AG04449 (cell line): ENCODE measurements at regions of chr5 and their contacts with region 1.

Region 1: DNA sequence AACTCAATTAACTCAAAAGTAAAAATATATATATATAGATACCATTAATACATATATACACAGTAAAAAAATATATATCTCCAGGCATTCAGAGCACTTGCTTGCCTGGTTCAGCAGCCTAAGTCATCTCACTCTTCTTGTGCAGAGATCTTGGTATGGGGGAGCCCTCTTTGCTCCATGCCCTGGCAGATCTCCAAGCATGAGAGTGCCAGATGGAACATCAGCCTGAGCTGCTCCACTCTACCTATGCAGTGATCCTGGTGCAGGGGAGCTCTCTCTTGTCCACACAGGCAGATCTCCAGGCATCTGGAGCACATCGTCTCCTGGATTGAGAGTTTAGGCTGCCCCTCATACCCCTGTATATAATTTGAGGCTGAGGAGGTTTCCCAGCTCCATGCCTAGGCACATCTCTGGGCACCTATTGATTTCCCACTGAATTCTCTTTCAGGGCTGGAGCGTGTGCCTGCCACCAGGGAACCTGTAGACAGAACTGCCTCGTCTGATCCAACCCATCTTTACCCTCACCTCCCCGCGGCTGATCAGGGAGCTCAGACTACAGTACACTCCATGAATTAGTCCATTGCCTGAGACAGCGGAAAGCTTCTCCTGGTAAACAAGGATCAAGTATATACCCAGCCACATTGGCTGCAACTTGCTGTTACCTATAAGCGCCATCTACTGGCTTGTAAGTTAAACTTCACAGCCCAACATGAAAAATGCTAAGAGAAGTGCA is 342.4 kb upstream of the GRIA1 start:
- DNase-seq: no peak
- H3K4me3 ChIP-seq: no peak overlapping the region
- CTCF ChIP-seq: peak; percentile 52

Region 2: DNA sequence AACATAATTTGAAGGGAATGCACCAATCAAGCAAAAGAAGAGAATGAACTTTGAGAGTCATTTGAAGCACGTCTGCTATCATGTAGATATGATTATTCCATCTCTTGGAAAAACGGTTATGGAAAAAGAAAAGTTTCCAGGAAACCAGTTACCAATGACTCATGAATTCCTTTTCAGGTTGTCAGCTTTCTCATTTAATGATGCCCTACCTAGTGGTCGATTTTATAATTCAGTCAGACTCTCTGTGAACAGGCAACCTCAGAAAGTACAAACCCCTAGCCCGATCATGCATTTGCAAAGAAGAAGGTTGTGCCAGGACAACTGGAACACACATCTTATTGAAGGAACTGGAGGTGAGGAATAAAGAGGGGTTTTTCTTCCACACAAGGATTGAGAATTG is 12.6 kb before region 1 on chr5:
- CTCF ChIA-PET with region 1: interaction called, 25 read pairs
- POLR2A ChIA-PET with region 1: no interaction called
- DNase-seq: no peak
- H3K4me3 ChIP-seq: no peak overlapping the region
- CTCF ChIP-seq: no peak

Region 3: DNA sequence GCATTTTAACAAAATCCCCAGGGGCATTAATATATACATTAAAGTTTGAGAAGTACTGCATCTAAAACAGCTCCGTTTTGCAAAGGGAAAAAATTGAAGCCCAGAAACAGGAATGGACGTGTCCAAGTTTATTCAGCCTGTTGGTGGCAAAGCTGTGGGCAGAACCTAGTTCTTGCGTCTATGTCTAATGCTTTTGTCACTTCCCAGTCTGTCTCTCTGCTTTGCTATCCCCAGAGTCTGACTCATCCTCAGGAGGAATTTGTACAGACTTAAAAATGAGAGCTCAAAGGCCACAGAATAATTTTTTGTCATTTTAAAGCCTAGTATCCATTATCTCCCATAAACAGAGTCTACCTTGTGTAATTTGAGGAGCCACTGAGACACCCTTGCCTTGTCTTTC is 11.6 kb after region 1 on chr5:
- CTCF ChIA-PET with region 1: interaction called, 40 read pairs
- POLR2A ChIA-PET with region 1: no interaction called
- DNase-seq: peak; percentile 45
- H3K4me3 ChIP-seq: no peak overlapping the region
- CTCF ChIP-seq: no peak